ENCODE measurements at regions of chr5 and their contacts with region 1.

Region 1: DNA sequence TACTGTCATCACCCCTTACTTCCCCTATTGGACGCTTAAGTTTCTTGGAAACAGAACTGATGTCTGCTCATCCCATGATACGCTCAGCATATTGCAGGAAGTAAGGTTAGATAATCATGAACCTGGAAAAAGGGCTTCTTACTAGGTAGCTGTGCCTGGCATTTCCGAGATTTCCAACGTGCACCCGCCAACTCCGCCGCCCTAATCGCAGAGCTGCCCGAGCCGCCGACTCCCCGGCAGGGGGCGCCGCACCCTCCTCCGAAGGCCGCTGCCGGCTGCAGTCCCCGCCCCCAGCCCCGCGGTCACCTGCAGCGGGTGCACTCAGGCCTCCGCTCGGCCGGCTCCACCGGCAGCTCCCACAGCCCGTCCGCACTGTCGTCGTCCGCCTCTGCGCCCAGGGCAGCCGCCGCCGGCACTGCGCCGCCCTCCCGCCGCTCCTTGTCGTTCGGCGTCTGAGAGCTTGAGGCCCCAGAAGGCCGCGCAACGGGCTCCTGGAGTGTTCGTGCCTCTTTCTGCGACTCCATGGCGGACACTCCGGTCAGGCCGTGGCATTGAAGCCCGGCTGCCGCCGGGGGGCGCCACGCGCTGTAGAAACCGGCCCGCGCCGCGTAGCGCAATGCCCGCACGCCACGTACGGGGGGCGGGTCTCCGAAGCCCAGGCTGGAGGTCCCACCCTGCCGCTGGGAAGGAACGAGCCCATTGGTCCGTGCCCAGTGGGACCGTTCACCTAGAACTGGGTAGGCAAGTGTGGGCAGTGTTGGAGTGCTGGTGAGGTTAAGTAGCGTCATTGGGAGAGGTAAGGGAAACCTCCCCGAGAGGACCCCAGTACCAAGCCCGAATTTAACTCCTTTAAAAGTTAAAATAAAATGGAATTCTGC is at the start of gene DTWD2:
- DNase-seq: peak; percentile 89 to 98 (median 95)

Region 2: GRCh38 chr5:119070828-119071572 is 82.8 kb after region 1 on chr5 and contains the start of gene DMXL1:
- intact Hi-C with region 1: loop called (anchors 2 kb)
- DNase-seq: peak; percentile 97 to 100 (median 99)

Region 3: DNA sequence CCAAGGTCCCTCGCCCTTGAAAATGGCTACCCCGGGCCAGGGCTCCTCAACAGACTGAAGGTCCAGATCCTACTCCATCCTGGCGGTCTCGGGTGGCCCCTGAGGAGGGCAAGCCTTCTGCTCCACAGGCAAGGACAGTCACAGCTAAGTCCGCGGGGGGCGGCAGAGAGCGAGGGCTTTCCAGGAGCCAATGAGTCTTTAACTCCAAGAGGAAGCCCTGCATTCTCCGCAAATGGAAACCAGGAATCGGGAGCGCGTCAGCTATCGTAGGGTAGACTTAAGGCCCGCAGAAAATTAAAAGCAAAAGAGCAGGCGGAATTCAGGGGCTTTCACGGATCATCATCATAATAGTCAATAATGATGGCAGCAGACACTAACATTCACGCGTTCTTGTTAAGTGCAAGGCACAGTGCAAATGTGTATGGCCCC is 279.7 kb after region 1 on chr5:
- intact Hi-C with region 1: loop called (anchors 10 kb)
- DNase-seq: peak; percentile 77 to 97 (median 91)

Region 4: GRCh38 chr5:119411935-119412602 is 423.8 kb after region 1 on chr5:
- intact Hi-C with region 1: loop called (anchors 5 kb)
- DNase-seq: peak; percentile 16 to 87 (median 58)

Region 5: GRCh38 chr5:119478781-119479180 is 490.6 kb after region 1 on chr5:
- intact Hi-C with region 1: no loop called
- DNase-seq: no peak

Measured in head of caudate nucleus (tissue), 42 donors.